Heart right ventricle (tissue), 16 donors: ENCODE measurements at regions of chr14 and their contacts with region 1.

Region 1: GRCh38 chr14:81829447-81829846 is 295.8 kb upstream of the SEL1L start:
- DNase-seq: peak in 1 of 2 donors; percentile 6
- ATAC-seq: no peak
- H3K4me3 ChIP-seq: no peak overlapping the region
- H3K27ac ChIP-seq: no peak overlapping the region
- H3K4me1 ChIP-seq: peaks cover 0 to 6% (median 0%) of the 10 kb centered on the region in 9 donors
- H3K27me3 ChIP-seq: no peaks in the 10 kb centered on the region
- CTCF ChIP-seq: no peak

Region 2: GRCh38 chr14:80549141-80549540 is 1280.3 kb before region 1 on chr14:
- intact Hi-C with region 1: loop called in 1 of 10 experiments (anchors 5 kb)
- DNase-seq: no peak
- ATAC-seq: peak in 4 of 8 donors; percentile 20 to 63 (median 38)
- H3K4me3 ChIP-seq: no peak overlapping the region
- H3K27ac ChIP-seq: peak overlapping the region in 2 of 10 donors; percentile 4 to 5
- H3K4me1 ChIP-seq: no peaks in the 10 kb centered on the region
- H3K27me3 ChIP-seq: no peaks in the 10 kb centered on the region
- CTCF ChIP-seq: no peak

Region 3: DNA sequence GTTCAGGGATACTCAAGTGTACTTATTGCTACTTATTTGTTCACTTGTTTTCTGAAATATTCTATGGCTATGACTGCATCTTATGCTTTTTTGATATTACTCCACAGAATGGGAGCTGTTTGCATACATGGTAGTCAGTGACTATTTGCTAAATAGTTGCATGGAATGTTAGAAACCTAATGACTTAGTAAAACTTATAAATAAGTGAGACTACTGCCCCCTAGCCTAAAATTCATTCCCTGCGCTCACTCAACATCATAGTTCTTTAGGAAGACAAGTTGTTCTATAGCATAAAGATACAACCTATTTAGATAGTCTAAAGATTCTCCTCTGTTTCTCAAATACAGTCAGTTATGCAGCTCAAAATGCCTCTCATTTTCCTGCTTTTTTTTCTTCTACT is 1193.4 kb before region 1 on chr14:
- intact Hi-C with region 1: no loop called
- DNase-seq: no peak
- ATAC-seq: no peak
- H3K4me3 ChIP-seq: no peak overlapping the region
- H3K27ac ChIP-seq: no peak overlapping the region
- H3K4me1 ChIP-seq: no peaks in the 10 kb centered on the region
- H3K27me3 ChIP-seq: no peaks in the 10 kb centered on the region
- CTCF ChIP-seq: peak in 1 of 9 donors; percentile 3

Region 4: GRCh38 chr14:81737938-81738337 is 91.5 kb before region 1 on chr14:
- intact Hi-C with region 1: no loop called
- DNase-seq: no peak
- ATAC-seq: no peak
- H3K4me3 ChIP-seq: no peak overlapping the region
- H3K27ac ChIP-seq: no peak overlapping the region
- H3K4me1 ChIP-seq: no peaks in the 10 kb centered on the region
- H3K27me3 ChIP-seq: peaks cover 0 to 6% (median 0%) of the 10 kb centered on the region in 7 donors
- CTCF ChIP-seq: no peak

Region 5: DNA sequence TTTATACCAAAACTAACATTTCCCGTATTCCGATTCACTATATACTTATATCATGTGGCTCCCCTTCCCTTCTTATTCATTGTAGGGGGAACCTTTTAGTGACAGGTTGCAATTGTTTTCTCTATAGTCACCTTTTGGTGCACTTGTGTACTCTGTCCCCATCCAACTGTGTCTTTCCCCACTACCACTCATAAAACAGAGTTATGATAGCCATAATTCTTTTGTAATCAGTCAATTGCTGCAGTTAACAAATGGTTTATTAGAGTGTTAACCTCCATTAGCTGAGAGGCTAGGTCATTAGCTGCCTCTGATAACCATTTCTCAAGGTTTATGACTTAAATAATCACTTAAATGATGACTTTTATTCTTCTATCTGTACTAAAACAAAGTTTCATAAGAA is 42.3 kb after region 1 on chr14:
- intact Hi-C with region 1: no loop called
- DNase-seq: no peak
- ATAC-seq: no peak
- H3K4me3 ChIP-seq: no peak overlapping the region
- H3K27ac ChIP-seq: no peak overlapping the region
- H3K4me1 ChIP-seq: no peaks in the 10 kb centered on the region
- H3K27me3 ChIP-seq: no peaks in the 10 kb centered on the region
- CTCF ChIP-seq: no peak

Region 6: GRCh38 chr14:82223276-82223675 is 393.8 kb after region 1 on chr14:
- intact Hi-C with region 1: no loop called
- DNase-seq: no peak
- ATAC-seq: no peak
- H3K4me3 ChIP-seq: no peak overlapping the region
- H3K27ac ChIP-seq: no peak overlapping the region
- H3K4me1 ChIP-seq: no peaks in the 10 kb centered on the region
- H3K27me3 ChIP-seq: no peaks in the 10 kb centered on the region
- CTCF ChIP-seq: no peak